Activated naive CD4-positive, alpha-beta T cell treated with anti-CD3 and anti-CD28 coated beads for 36 hours (primary cell): ENCODE measurements at regions of chr1 and their contacts with region 1.

Region 1: DNA sequence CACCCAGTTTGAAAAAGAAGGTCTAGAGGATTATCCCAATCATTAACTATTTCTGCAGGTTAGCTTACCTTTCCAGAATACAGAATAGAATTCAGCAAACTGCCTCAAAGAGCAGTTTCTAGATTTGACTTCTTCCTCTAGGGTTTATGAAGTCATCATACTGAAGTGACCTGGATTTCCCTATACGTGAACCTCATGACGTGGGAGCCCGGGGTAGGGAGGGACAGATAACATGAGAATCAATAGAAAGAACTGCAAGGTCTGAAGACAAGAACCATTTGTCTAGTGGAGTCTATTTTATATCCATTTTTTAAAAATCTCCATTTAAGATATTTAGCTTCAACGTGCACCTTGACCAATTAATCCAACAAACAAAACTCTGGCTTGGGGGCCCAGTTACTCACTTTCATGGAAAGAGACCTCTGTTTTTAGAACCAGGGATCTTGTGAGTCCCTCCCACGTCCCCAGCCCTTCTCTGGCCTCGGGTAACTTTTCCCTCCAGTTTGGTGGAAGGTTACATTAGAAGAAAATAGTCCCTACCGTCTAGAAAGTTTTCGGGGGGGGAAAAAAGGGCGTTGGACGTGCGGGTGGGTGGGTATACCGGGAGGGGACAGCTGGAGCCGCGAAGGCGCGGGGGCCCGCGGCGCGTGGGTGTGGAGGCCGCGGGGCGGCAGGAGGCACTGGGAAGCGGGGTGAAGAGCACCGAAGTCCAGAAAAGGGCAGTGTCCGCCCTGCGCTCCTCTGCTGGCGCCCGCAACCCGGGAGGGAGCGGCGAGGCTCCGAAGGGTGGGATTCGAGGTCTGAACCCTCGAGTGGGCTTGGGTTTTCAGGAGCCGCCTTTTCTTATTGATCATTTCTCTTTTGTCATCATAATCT is 13.8 kb upstream of the POGZ start:
- DNase-seq: peak; percentile 39
- H3K4me3 Mint-ChIP-seq: peak overlapping the region; percentile 52
- H3K27ac Mint-ChIP-seq: peak overlapping the region; percentile 72
- H3K4me1 Mint-ChIP-seq: peaks cover 28% of the 10 kb centered on the region
- H3K27me3 Mint-ChIP-seq: no peaks in the 10 kb centered on the region

Region 2: DNA sequence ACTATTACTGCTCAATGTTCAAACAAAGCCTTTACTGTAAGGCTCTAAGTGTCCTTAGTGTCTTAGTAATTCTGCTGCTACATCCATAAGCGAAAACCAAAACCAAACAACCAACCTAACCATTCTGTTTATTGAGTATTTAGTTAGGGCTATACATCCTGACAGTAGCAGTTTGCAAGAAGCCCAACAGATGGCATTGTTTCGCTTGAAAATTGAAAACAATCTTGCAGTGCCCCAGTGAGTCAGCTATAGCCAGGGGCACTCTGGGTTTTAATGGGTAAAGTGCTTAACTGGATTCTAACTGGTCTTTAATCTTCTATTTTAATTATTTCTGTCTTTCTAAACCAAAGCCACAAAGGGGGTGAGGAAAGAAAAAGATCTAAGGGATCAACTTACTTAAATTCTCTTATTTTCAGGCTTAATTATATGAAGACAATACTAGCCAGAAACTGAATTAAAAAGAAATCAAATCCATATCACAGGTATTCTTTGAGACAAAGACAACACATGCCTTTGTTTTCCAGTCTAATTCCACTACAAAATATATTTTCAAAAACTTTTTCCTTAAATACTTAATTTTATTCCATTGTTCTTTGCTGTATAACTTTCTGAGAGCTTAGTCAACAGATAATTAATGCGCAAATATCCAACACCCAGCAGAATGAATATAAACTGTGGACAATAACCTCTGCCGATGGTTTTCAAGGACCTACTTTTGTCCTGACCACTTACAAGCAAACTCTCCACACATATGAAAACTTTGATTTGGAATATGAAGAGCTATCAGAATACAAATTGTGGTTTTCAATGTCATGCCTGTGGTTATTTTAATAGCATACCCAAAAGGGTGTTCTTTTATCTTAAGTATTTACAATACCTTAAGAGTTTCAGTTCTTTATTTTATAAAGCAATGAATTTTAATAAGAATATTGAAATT is 29.0 kb before region 1 on chr1:
- CTCF ChIA-PET with region 1: interaction called, 5 read pairs
- intact Hi-C with region 1: loop called (anchors 5 kb)
- DNase-seq: peak; percentile 85
- H3K4me3 Mint-ChIP-seq: no peak overlapping the region
- H3K27ac Mint-ChIP-seq: no peak overlapping the region
- H3K4me1 Mint-ChIP-seq: peaks cover 53% of the 10 kb centered on the region
- H3K27me3 Mint-ChIP-seq: no peaks in the 10 kb centered on the region

Region 3: DNA sequence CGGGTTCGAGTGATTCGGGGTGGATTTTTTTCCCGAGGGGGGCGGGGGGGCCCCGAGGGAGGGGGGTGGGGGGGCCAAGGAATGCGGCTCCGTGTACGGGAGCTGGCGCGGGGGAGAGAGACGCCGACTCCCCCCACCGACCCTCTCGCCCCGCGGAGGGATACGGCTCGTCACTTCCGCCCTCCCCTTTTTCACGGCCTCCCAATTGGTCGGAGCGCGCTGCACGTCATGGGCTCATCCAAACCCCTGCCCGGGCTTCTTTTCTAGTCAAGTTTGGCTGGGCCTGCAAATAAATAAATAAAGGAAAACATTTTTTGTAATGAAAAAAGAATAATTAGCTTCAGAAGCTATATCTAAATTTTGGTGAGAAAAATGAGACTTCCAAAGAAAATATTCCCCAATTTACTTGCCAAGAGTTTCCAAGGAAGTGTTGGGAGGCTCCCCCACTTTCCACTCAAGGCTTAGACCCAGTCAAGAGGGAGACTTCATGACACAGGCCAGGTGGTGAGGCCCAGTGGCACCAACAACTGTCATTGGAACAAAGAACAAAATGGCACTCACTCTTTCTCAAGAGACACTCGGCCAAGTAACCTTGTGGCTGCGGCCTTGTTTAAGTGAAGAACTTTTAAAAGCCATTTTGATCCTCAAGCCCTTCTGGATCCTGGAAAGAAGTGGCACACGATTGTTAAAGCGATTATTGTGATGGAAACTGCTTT is 13.6 kb before region 1 on chr1 and contains the start of gene POGZ:
- CTCF ChIA-PET with region 1: interaction called, 3 read pairs
- intact Hi-C with region 1: loop called (anchors 1 kb)
- DNase-seq: peak; percentile 97
- H3K4me3 Mint-ChIP-seq: peak within 1 kb of the TSS; percentile 78
- H3K27ac Mint-ChIP-seq: peak within 1 kb of the TSS; percentile 86
- H3K4me1 Mint-ChIP-seq: peaks cover 29% of the 10 kb centered on the region
- H3K27me3 Mint-ChIP-seq: peaks cover 11% of the 10 kb centered on the region
- total RNA-seq, gene POGZ: 69.7 to 73.7 TPM

Region 4: GRCh38 chr1:151494741-151495281 is 21.7 kb after region 1 on chr1:
- CTCF ChIA-PET with region 1: no interaction called
- intact Hi-C with region 1: loop called (anchors 1 kb)
- DNase-seq: peak; percentile 7
- H3K4me3 Mint-ChIP-seq: no peak overlapping the region
- H3K27ac Mint-ChIP-seq: no peak overlapping the region
- H3K4me1 Mint-ChIP-seq: peaks cover 7% of the 10 kb centered on the region
- H3K27me3 Mint-ChIP-seq: no peaks in the 10 kb centered on the region

Region 5: GRCh38 chr1:151539990-151540981 is 67.2 kb after region 1 on chr1 and contains the start of gene TUFT1:
- CTCF ChIA-PET with region 1: no interaction called
- intact Hi-C with region 1: loop called (anchors 2 kb)
- DNase-seq: peak; percentile 95
- H3K4me3 Mint-ChIP-seq: peak within 1 kb of the TSS; percentile 84
- H3K27ac Mint-ChIP-seq: no peak within 1 kb of the TSS
- H3K4me1 Mint-ChIP-seq: peaks cover 14% of the 10 kb centered on the region
- H3K27me3 Mint-ChIP-seq: peaks cover 3% of the 10 kb centered on the region
- total RNA-seq, gene TUFT1: 2.3 to 2.8 TPM